ENCODE measurements at regions of chr22 and their contacts with region 1.

Region 1: GRCh38 chr22:33579448-33580093 is 340.7 kb downstream of the LARGE1 start:
- DNase-seq: peak; percentile 30 to 41 (median 38)
- ATAC-seq: peak; percentile 69
- H3K4me3 ChIP-seq: no peak overlapping the region
- H3K27ac ChIP-seq: no peak overlapping the region
- H3K4me1 ChIP-seq: no peaks in the 10 kb centered on the region
- H3K27me3 ChIP-seq: no peaks in the 10 kb centered on the region
- CTCF ChIP-seq: peak; percentile 49 to 58 (median 51)
- EP300 ChIP-seq: no peak
- POLR2A ChIP-seq: no peak
- RAD21 ChIP-seq: peak; percentile 26 to 62

Region 2: GRCh38 chr22:33302049-33302545 is 277.5 kb before region 1 on chr22:
- CTCF ChIA-PET with region 1: interaction called, 3 read pairs
- POLR2A ChIA-PET with region 1: no interaction called
- in situ Hi-C with region 1: no loop called
- intact Hi-C with region 1: loop called (anchors 5 kb)
- DNase-seq: peak; percentile 56 to 68 (median 60)
- ATAC-seq: peak; percentile 91
- H3K4me3 ChIP-seq: no peak overlapping the region
- H3K27ac ChIP-seq: no peak overlapping the region
- H3K4me1 ChIP-seq: no peaks in the 10 kb centered on the region
- H3K27me3 ChIP-seq: no peaks in the 10 kb centered on the region
- CTCF ChIP-seq: peak; percentile 75 to 80 (median 76)
- EP300 ChIP-seq: no peak
- POLR2A ChIP-seq: no peak
- RAD21 ChIP-seq: peak; percentile 56 to 78

Region 3: GRCh38 chr22:33519071-33519973 is 60.2 kb before region 1 on chr22:
- CTCF ChIA-PET with region 1: no interaction called
- POLR2A ChIA-PET with region 1: no interaction called
- in situ Hi-C with region 1: no loop called
- intact Hi-C with region 1: loop called (anchors 10 kb)
- DNase-seq: peak; percentile 8 to 17 (median 14)
- ATAC-seq: 0 out of 3 replicates have a peak, but pooled peaks have one; percentile 31
- H3K4me3 ChIP-seq: no peak overlapping the region
- H3K27ac ChIP-seq: no peak overlapping the region
- H3K4me1 ChIP-seq: no peaks in the 10 kb centered on the region
- H3K27me3 ChIP-seq: no peaks in the 10 kb centered on the region
- CTCF ChIP-seq: peak; percentile 6 to 49 (median 42); a peak in 3 of 6 replicates
- EP300 ChIP-seq: no peak
- POLR2A ChIP-seq: no peak
- RAD21 ChIP-seq: peak in 1 of 2 experiments; percentile 33; a peak in 2 of 4 replicates